BJ (cell line): ENCODE measurements at regions of chr18 and their contacts with region 1.

Region 1: GRCh38 chr18:48445540-48445939 is 36.4 kb upstream of the ZBTB7C start:
- DNase-seq: no peak
- H3K4me3 ChIP-seq: no peak overlapping the region
- H3K27me3 ChIP-seq: peaks cover 44% of the 10 kb centered on the region
- CTCF ChIP-seq: peak; percentile 98

Region 2: GRCh38 chr18:48230467-48231113 is 214.9 kb before region 1 on chr18:
- CTCF ChIA-PET with region 1: interaction called, 27 read pairs
- POLR2A ChIA-PET with region 1: no interaction called
- DNase-seq: no peak
- H3K4me3 ChIP-seq: no peak overlapping the region
- H3K27me3 ChIP-seq: peaks cover 10% of the 10 kb centered on the region; the same call in 1 of the 2 replicates
- CTCF ChIP-seq: peak; percentile 63

Region 3: DNA sequence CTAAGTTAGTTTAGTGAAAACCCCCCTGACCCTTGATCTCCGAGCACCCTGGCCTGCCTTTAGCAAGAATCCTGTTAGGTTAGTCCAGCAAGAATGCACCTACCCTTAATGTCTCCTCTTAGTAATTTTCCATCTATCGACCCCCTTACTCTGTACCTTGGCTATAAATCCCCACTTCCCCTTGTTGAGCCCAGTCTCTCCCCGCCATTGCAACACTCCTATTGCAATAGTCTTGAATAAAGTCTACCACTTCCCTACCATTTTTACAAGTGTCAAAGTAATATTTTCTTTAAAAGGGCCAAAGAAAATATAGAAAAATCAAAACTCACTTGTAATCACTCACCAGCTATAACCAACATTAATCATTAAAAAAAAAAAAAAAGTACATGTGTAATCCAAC is 32.2 kb before region 1 on chr18:
- CTCF ChIA-PET with region 1: interaction called, 10 read pairs
- POLR2A ChIA-PET with region 1: no interaction called
- DNase-seq: no peak
- H3K4me3 ChIP-seq: no peak overlapping the region
- H3K27me3 ChIP-seq: peaks cover 14% of the 10 kb centered on the region
- CTCF ChIP-seq: no peak

Region 4: GRCh38 chr18:48455555-48456478 is 10.3 kb after region 1 on chr18:
- CTCF ChIA-PET with region 1: interaction called, 61 read pairs
- POLR2A ChIA-PET with region 1: no interaction called
- DNase-seq: peak; percentile 69
- H3K4me3 ChIP-seq: no peak overlapping the region
- H3K27me3 ChIP-seq: peaks cover 6% of the 10 kb centered on the region
- CTCF ChIP-seq: no peak

Region 5: DNA sequence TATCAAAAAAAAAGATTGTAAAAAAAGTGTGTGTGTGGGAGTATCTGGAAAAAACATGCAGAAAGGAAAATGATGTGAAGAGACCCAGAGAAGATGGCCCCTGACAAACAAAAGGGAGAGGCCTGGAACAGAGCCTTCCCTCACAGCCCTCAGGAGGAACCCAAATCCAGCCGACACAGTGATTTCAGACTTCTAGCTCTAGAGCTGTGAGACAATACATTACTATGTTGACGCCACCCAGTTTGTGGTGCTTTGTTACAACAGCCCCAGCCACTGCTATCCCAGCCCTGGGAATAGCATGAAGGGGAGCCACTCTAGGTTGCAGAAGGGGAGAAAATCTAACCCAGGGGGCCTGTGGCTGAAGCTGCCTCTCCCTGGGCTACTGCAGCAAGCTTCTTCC is 22.6 kb after region 1 on chr18:
- CTCF ChIA-PET with region 1: interaction called, 32 read pairs
- POLR2A ChIA-PET with region 1: no interaction called
- DNase-seq: no peak
- H3K4me3 ChIP-seq: no peak overlapping the region
- H3K27me3 ChIP-seq: no peaks in the 10 kb centered on the region
- CTCF ChIP-seq: no peak

Region 6: DNA sequence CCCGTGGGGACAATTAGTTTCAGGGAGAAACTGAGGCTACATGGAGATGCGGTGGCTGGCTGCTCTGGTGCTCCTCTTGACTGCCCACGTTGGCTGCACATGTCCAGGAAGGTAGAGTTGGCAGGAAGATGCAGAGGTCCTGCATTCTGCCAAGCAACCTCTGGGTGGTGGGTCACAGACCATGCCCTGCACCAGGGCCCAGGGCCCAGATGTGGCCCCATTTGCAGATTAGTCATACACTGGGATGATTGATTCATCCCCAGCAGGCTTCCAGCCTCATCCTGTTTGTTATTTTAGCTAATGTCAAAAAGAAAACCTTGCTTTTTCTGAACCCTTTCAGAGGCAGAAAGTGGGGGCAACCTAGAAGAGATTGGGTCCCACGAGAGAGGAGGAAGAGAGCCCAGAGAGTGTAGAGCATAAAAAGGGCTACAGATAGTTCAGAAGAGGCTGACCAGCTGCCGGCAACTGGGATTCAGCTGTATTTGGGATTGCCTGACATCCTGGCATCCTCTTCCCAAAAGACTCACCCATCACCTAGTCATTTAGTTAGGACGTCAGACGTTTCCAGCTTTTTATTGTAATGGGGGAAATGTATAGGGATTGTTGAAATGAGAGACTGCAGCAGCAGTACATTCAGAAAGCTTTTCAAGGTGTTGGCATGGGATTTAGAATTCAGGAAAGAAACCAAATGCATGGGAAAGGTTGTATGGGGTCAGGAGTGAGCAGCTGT is 195.2 kb after region 1 on chr18:
- CTCF ChIA-PET with region 1: no interaction called
- POLR2A ChIA-PET with region 1: no interaction called
- DNase-seq: no peak
- H3K4me3 ChIP-seq: no peak overlapping the region
- H3K27me3 ChIP-seq: no peaks in the 10 kb centered on the region
- CTCF ChIP-seq: no peak

Region 7: GRCh38 chr18:48834413-48835031 is 389.0 kb after region 1 on chr18:
- CTCF ChIA-PET with region 1: no interaction called
- POLR2A ChIA-PET with region 1: no interaction called
- DNase-seq: peak; percentile 83
- H3K4me3 ChIP-seq: no peak overlapping the region
- H3K27me3 ChIP-seq: no peaks in the 10 kb centered on the region
- CTCF ChIP-seq: no peak